ENCODE measurements at regions of chr22 and their contacts with region 1.

Region 1: GRCh38 chr22:23696326-23696851 is 5.6 kb downstream of the RGL4 start:
- DNase-seq: peak; percentile 85
- CTCF ChIP-seq: no peak

Region 2: DNA sequence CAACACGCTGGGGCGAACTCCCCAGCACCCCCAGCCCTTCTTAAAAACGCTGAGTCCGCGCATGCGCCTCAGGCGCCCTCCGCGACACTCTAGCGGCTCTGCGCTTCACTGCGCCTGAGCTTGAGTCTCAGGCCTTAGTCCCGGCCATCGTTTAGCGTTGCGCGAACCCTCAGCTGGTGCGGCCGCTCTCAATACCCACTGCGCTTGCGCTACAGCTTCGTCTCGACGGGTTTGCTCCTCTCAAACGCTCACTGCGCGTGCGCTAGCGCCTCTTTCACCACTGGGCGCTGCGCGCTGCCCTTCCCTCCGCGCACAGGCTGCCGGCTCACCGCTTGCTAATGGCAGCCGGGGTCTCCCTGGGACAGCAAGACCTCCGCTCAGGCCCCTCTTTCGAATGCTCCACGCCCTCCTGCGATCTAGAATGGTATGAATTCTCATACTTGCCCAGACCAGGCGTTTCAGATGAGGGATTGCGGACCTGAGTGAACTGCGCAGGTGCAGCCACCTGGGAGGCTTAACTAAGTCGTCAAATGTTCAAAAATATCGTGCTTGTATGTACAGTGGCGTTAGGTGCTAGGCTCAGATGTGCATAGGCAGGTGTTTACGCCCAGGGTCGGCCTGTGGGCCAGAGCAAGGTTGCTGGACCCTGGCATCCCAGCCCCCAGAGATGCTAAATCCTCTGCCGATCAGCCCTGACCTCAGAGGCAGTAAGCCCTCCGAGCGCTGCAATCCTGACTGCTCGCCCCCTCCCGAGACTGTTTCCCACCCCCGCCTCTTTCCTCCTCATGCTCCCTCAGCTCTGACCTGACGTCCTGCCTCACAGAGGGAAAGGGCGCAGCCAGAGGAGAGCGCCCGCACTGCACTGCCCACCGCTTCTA is 161.5 kb after region 1 on chr22 and contains the start of gene SLC2A11:
- in situ Hi-C with region 1: loop called (anchors 10 kb)
- DNase-seq: peak; percentile 99
- CTCF ChIP-seq: no peak